ENCODE measurements at regions of chr5 and their contacts with region 1.

Region 1: DNA sequence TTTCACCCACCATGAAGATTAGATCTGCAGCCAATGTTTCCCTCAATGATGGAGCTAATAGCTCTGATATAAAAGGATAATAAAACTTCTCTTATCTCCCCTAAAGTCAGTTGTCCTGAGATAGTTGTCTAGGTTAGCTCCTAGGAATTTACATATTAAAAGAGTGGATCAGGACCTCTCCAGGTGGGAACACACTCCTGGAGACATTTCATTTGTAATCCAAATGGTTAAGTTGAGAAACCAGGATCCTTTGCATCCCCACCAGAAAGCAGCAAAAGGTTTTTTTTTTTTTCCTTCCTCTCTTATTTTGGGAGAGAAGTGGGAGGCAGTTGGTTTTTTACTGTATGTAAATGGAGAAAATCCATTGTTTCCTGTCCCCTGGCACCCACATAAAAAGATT is 182.5 kb upstream of the FBXL17 start:
- DNase-seq: no peak
- H3K4me3 ChIP-seq: no peak overlapping the region
- H3K27ac ChIP-seq: no peak overlapping the region
- H3K4me1 ChIP-seq: no peaks in the 10 kb centered on the region
- H3K27me3 ChIP-seq: no peaks in the 10 kb centered on the region
- CTCF ChIP-seq: no peak

Region 2: GRCh38 chr5:108546471-108546870 is 18.0 kb before region 1 on chr5:
- CTCF ChIA-PET with region 1: no interaction called
- POLR2A ChIA-PET with region 1: interaction called, 12 read pairs
- intact Hi-C with region 1: no loop called
- DNase-seq: no peak
- H3K4me3 ChIP-seq: no peak overlapping the region
- H3K27ac ChIP-seq: no peak overlapping the region
- H3K4me1 ChIP-seq: no peaks in the 10 kb centered on the region
- H3K27me3 ChIP-seq: no peaks in the 10 kb centered on the region
- CTCF ChIP-seq: no peak